ENCODE measurements at regions of chr7 and their contacts with region 1.

Region 1: GRCh38 chr7:38660427-38661099 is 29.4 kb upstream of the AMPH start:
- DNase-seq: no peak

Region 2: DNA sequence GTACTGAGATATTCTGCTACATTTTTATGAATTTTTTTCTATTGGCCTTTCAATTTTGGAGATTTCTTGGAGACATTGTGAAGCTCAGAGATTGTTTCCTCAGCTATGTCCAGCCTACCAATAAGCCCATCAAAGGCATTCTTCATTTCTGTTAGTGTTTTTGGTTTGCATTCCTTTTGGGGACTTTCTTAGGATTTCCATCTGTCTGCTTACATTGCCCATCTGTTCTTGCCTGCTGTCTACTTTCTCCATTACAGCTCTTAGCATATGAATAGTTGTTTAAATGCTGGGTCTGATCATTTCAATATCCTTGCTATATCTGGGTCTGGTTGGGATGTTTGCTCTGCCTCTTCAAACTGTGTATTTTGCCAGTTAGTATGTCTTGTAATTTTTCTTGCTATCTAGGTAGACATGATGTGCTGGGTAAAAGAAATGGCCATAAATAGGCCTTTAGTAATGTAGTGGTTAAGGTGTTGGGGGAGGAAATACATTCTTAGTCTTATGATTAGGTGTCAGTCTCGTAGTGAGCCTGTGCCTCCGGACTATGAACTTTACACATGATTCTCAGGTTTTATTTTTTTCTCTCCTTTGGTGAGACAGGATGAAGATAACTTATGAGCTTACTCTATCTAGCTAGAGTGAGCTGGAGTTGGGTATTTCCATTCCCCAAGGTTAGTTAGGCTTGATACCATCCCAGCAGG is 844.7 kb before region 1 on chr7:
- intact Hi-C with region 1: no loop called
- DNase-seq: no peak

Region 3: DNA sequence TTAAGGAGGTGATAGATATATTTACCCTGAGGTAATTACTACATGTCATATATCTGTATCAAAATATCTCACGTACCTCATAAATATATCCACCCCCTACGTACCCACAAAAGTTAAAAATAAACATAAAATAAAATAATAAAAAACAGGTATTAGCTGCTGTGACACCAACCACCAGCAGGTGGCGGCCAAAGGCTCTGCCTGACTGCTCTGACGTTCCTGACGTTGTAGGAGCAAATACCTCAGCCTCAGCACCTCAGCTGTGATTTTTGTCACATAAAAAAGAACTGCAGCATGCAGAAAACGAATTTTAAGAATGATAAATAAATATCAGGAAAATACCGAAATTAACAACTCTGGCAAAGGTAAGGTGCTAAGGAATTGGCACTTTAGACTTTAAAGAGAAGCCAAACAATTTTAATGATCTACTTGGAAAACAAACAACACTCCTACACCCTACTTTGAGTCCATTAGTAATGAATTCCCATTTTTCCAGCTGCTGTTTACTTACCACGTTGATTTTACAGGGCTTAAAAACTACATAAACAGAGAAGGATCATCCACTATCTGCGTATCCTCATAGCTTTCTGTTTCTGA is 261.7 kb before region 1 on chr7:
- intact Hi-C with region 1: loop called (anchors 1 kb)
- DNase-seq: no peak

Region 4: GRCh38 chr7:38451840-38452239 is 208.7 kb before region 1 on chr7:
- intact Hi-C with region 1: loop called (anchors 5 kb)
- DNase-seq: no peak